ENCODE measurements at regions of chr4 and their contacts with region 1.

Region 1: DNA sequence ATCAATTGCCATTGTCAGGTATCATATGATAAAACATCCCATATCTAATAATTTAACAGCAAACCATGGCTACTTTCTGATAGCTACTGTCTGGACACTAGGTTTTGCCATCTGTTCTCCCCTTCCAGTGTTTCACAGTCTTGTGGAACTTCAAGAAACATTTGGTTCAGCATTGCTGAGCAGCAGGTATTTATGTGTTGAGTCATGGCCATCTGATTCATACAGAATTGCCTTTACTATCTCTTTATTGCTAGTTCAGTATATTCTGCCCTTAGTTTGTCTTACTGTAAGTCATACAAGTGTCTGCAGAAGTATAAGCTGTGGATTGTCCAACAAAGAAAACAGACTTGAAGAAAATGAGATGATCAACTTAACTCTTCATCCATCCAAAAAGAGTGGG is 7.0 kb downstream of the NPY5R start:
- DNase-seq: peak; percentile 65
- ATAC-seq: peak; percentile 95
- H3K4me3 ChIP-seq: no peak overlapping the region
- H3K27ac ChIP-seq: no peak overlapping the region
- H3K4me1 ChIP-seq: peaks cover 5% of the 10 kb centered on the region
- H3K27me3 ChIP-seq: no peaks in the 10 kb centered on the region
- CTCF ChIP-seq: no peak

Region 2: GRCh38 chr4:163367651-163368050 is 17.0 kb after region 1 on chr4:
- CTCF ChIA-PET with region 1: no interaction called
- POLR2A ChIA-PET with region 1: no interaction called
- intact Hi-C with region 1: loop called (anchors 2 kb)
- DNase-seq: peak; percentile 73
- ATAC-seq: peak; percentile 95
- H3K4me3 ChIP-seq: no peak overlapping the region
- H3K27ac ChIP-seq: peak overlapping the region; percentile 44
- H3K4me1 ChIP-seq: peaks cover 9% of the 10 kb centered on the region
- H3K27me3 ChIP-seq: no peaks in the 10 kb centered on the region
- CTCF ChIP-seq: no peak

Region 3: GRCh38 chr4:163448516-163449197 is 98.0 kb after region 1 on chr4:
- CTCF ChIA-PET with region 1: no interaction called
- POLR2A ChIA-PET with region 1: no interaction called
- intact Hi-C with region 1: loop called (anchors 10 kb)
- DNase-seq: peak; percentile 84
- ATAC-seq: peak; percentile 95
- H3K4me3 ChIP-seq: peak overlapping the region; percentile 23; the same call in 1 of the 2 replicates
- H3K27ac ChIP-seq: peak overlapping the region; percentile 54
- H3K4me1 ChIP-seq: peaks cover 16% of the 10 kb centered on the region; the same call in 1 of the 2 replicates
- H3K27me3 ChIP-seq: no peaks in the 10 kb centered on the region
- CTCF ChIP-seq: no peak

Measured in PC-3 (cell line).